Transverse colon (tissue), 4 donors: ENCODE measurements at regions of chr1 and their contacts with region 1.

Region 1: GRCh38 chr1:6401673-6402072 is 8.1 kb upstream of the ACOT7 start:
- DNase-seq: no peak
- H3K4me3 ChIP-seq: no peak overlapping the region
- H3K27ac ChIP-seq: no peak overlapping the region
- H3K4me1 ChIP-seq: peaks cover 0 to 5% (median 2%) of the 10 kb centered on the region in 4 donors
- H3K27me3 ChIP-seq: no peaks in the 10 kb centered on the region
- CTCF ChIP-seq: no peak
- EP300 ChIP-seq: no peak
- POLR2A ChIP-seq: no peak

Region 2: DNA sequence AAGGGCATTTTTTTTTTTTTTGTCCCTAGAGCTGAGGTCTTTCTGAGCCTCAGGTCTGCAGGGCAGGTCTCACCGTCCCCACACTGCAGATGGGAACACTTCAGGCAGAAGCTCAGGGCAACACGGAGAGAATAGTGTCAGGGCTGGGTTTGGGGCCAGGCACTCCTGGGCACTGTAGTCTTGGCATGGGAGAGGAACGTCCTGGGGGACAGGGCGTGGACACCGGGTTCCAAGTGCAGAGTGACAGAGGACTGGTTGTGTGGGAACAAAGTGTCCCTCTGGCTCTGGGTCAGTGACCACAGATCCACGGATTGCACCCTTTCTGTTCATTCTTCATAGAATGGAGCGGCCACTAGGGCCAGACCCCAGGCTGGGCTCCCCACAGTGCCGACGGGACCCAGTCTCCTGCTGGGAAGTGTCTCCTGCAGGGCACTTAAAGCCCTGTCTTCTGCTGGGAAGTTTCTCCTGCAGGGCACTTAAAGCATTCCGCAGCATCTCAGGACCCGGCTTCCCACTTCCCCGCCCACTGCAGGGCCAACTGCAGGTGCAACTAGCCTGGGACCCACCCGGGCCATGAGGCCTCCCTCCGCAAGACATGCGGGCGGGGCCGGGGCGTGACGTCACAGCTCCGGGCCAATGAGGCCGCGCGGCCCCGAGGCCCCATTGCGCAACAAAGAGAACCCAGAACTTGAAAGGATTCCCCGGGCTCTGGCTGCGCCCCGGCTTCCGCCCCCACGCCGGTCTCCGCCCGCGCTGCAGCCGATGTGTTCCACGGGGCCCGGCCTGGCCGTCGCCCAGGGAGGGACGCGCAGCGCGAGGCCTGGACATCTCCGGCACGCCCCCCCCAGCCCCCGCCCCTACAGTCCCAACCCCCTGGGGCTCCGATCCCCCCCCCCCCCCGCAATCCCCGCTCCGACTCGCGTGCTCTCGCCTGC is 141.9 kb before region 1 on chr1:
- in situ Hi-C with region 1: loop called in 1 of 4 experiments (anchors 10 kb)
- intact Hi-C with region 1: no loop called
- DNase-seq: peak; percentile 86
- H3K4me3 ChIP-seq: peak overlapping the region; percentile 36 to 75 (median 62)
- H3K27ac ChIP-seq: peak overlapping the region; percentile 58 to 82 (median 79)
- H3K4me1 ChIP-seq: peaks cover 5 to 25% (median 22%) of the 10 kb centered on the region in 4 donors
- H3K27me3 ChIP-seq: peaks cover 20% of the 10 kb centered on the region
- CTCF ChIP-seq: no peak
- EP300 ChIP-seq: no peak
- POLR2A ChIP-seq: peak; percentile 19

Region 3: DNA sequence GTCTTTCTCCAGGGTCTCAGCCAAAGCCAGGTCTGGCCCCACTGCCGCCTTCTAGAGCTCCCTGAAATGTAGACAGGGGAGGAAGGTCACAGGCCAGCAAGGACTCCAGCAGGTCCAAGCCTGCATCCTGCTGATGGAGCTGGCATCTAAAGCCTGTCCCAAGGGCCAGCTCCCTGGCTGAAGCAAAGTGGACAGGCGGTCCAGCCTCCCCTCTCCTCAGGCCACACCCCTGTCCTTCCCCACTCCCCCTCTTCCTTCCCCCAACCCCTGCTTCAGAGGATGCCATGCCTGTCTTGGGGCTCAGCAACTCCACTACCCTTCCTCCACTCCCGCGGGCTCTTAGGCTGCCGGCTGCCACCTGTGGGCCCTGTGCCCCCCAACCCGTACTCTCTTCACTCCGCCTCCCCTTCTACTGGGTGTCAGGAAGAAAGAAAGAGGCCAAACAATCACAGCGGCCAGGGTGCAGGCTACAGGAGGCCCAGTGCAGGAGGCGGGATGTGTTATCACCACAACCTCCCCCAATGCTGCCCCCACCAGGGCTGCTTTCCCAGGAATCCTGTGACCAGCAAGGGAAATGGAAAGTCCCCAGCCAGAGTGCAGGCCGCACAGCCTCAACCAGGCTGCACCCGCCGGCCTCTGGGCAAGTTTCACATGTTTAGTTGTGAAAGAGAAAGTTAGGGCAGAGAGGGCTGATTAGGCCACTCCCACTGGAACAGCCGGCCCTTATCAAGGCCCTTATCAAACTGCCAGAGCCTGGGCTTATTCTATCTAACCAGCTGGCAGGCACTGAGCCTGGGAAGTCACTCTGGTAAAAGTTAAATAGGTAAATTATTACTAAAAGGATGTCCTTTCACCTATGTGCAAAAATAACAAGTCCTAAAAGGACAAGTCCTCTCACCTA is 42.2 kb before region 1 on chr1:
- in situ Hi-C with region 1: loop called in 1 of 4 experiments (anchors 10 kb)
- intact Hi-C with region 1: loop called (anchors 5 kb)
- DNase-seq: peak; percentile 89
- H3K4me3 ChIP-seq: peak overlapping the region in 2 of 4 donors; percentile 13 to 22
- H3K27ac ChIP-seq: peak overlapping the region; percentile 87 to 93 (median 90)
- H3K4me1 ChIP-seq: peaks cover 36 to 81% (median 63%) of the 10 kb centered on the region in 4 donors
- H3K27me3 ChIP-seq: no peaks in the 10 kb centered on the region
- CTCF ChIP-seq: no peak
- EP300 ChIP-seq: no peak
- POLR2A ChIP-seq: peak; percentile 78

Region 4: GRCh38 chr1:6833804-6834203 is 432.1 kb after region 1 on chr1:
- in situ Hi-C with region 1: no loop called
- intact Hi-C with region 1: no loop called
- DNase-seq: no peak
- H3K4me3 ChIP-seq: no peak overlapping the region
- H3K27ac ChIP-seq: no peak overlapping the region
- H3K4me1 ChIP-seq: peaks cover 8 to 26% (median 13%) of the 10 kb centered on the region in 4 donors
- H3K27me3 ChIP-seq: no peaks in the 10 kb centered on the region
- CTCF ChIP-seq: no peak
- EP300 ChIP-seq: no peak
- POLR2A ChIP-seq: no peak